GM13977 (cell line): ENCODE measurements at regions of chr12 and their contacts with region 1.

Region 1: GRCh38 chr12:57904848-57905811 is 36.2 kb upstream of the ATP23 start:
- DNase-seq: peak; percentile 74
- CTCF ChIP-seq: peak; percentile 100

Region 2: GRCh38 chr12:57621497-57622292 is 283.4 kb before region 1 on chr12:
- in situ Hi-C with region 1: no loop called
- DNase-seq: peak; percentile 88
- CTCF ChIP-seq: peak; percentile 92

Region 3: DNA sequence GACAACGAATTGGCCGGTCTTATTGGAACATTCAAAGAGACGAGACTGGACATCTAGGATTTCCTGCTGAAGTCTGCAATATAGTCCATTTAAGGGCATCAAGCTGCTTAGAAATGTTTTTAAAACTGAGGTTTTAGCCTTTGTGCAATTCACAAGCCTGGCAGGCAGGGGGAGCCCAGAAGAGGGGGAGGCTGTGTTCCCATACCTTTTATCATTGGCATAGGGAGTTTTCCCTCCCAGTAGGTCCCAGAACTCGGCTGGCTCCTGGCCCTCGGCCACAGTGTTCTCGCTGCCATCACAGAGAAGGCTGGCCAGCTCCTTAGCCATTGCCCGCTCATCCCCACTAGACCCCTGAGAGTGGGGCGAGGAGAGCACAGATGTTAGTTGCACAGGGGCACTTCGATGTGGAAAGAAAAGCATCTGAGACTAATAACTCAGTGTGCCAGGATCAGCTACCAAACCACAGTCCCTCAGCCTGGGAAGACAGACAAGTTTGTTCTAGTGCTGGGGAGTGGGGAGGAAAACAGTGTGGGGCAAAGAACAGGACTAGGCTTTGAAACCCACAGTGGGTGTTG is 101.7 kb before region 1 on chr12:
- in situ Hi-C with region 1: loop called (anchors 5 kb)
- DNase-seq: peak; percentile 41
- CTCF ChIP-seq: peak; percentile 69

Region 4: GRCh38 chr12:57836442-57837375 is 68.4 kb before region 1 on chr12:
- in situ Hi-C with region 1: loop called (anchors 10 kb)
- DNase-seq: peak; percentile 68
- CTCF ChIP-seq: no peak